GM12878 (cell line): ENCODE measurements at regions of chr5 and their contacts with region 1.

Region 1: DNA sequence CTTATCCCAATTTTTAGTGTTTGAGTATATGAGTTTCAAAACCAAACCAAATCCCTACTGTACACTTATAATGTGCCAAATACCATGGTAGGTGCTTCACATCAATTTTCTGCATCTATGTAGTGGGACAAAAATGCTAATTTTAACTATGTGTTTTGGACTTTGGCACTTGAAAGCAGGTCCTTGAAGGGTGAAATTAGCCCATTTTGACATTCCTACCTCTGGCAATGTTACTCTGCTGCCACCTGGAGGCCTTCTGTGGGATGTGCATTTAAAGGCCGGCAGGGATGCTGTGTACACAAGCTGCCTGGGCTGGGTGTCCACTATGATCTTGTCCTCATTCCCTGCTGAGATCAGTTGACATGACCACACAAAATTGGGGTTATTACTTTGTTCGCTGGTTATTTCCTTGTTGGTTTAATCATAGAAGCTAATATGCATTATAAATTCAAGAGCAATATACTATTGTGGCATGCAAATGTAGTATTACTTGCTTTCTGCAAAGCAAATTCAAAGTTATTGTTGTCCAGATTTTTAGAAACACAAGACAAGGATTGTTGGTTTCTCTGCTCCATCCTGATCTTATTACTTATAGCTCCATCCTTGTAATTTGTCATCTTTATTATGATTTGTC is 166.8 kb downstream of the ARHGEF28 start:
- DNase-seq: peak; percentile 41
- ATAC-seq: peak; percentile 79
- H3K4me3 ChIP-seq: no peak overlapping the region
- H3K27ac ChIP-seq: no peak overlapping the region
- H3K4me1 ChIP-seq: peaks cover 6% of the 10 kb centered on the region
- H3K27me3 ChIP-seq: no peaks in the 10 kb centered on the region; a peak in 1 of 4 replicates
- CTCF ChIP-seq: peak; percentile 96 to 99 (median 98); a peak in 5 of 6 replicates
- EP300 ChIP-seq: no peak
- POLR2A ChIP-seq: no peak
- RAD21 ChIP-seq: peak; percentile 99

Region 2: GRCh38 chr5:73519531-73520283 is 273.1 kb before region 1 on chr5:
- CTCF ChIA-PET with region 1: interaction called, 5 read pairs
- POLR2A ChIA-PET with region 1: no interaction called
- RAD21 ChIA-PET with region 1: interaction called, 4 read pairs
- SMC1A ChIA-PET with region 1: interaction called, 3 read pairs
- in situ Hi-C with region 1: no loop called
- intact Hi-C with region 1: loop called (anchors 2 kb)
- DNase-seq: peak; percentile 48
- ATAC-seq: peak; percentile 100
- H3K4me3 ChIP-seq: no peak overlapping the region
- H3K27ac ChIP-seq: no peak overlapping the region
- H3K4me1 ChIP-seq: no peaks in the 10 kb centered on the region
- H3K27me3 ChIP-seq: no peaks in the 10 kb centered on the region
- CTCF ChIP-seq: peak; percentile 83 to 96 (median 92)
- EP300 ChIP-seq: no peak
- POLR2A ChIP-seq: no peak
- RAD21 ChIP-seq: peak; percentile 91

Region 3: DNA sequence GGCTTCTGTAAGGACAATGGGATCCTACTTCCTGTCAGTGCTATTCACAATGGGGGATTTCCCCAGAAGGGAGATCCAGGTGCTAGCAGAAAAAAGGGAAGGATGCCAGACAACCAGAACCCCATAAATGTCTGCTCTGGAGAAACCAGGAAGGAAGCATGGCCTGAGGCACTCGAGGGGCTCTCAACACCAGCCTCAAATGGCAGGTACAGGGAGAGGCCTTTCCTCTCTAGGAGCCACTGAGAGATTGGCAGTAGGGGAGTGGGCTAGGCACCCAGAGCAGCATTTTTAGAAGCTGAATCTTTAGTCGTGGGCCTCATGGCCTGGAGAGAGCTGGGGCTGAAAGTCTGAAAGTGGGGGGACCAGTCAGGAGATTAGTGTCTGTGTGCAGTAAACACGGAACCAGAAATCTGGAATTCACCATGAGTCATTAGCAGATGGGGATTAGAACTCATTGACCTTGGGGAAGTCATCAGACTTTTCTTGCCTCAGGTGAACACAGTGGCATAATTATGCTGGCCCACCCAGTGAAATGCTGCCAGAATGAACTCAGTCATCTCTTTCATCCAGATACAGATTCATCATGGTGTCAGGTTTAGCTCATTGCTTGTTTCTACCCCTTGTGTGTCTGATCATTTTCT is 138.5 kb before region 1 on chr5:
- CTCF ChIA-PET with region 1: interaction called, 11 read pairs
- POLR2A ChIA-PET with region 1: no interaction called
- RAD21 ChIA-PET with region 1: interaction called, 3 read pairs
- SMC1A ChIA-PET with region 1: interaction called, 6 read pairs
- in situ Hi-C with region 1: no loop called
- intact Hi-C with region 1: no loop called
- DNase-seq: peak; percentile 65
- ATAC-seq: peak; percentile 88
- H3K4me3 ChIP-seq: no peak overlapping the region
- H3K27ac ChIP-seq: peak overlapping the region; percentile 59
- H3K4me1 ChIP-seq: peaks cover 23% of the 10 kb centered on the region
- H3K27me3 ChIP-seq: no peaks in the 10 kb centered on the region; a peak in 1 of 4 replicates
- CTCF ChIP-seq: no peak
- EP300 ChIP-seq: peak in 1 of 2 experiments; percentile 69; a peak in 1 of 4 replicates
- POLR2A ChIP-seq: no peak
- RAD21 ChIP-seq: no peak

Region 4: GRCh38 chr5:73693481-73694061 is 99.2 kb before region 1 on chr5:
- CTCF ChIA-PET with region 1: interaction called, 57 read pairs
- POLR2A ChIA-PET with region 1: interaction called, 3 read pairs
- RAD21 ChIA-PET with region 1: interaction called, 33 read pairs
- SMC1A ChIA-PET with region 1: interaction called, 95 read pairs
- in situ Hi-C with region 1: no loop called
- intact Hi-C with region 1: loop called (anchors 1 kb)
- DNase-seq: no peak
- ATAC-seq: peak; percentile 37
- H3K4me3 ChIP-seq: no peak overlapping the region
- H3K27ac ChIP-seq: peak overlapping the region; percentile 14; the same call in 1 of the 2 replicates
- H3K4me1 ChIP-seq: peaks cover 17% of the 10 kb centered on the region
- H3K27me3 ChIP-seq: no peaks in the 10 kb centered on the region
- CTCF ChIP-seq: peak; percentile 36 to 60 (median 38); a peak in 5 of 6 replicates
- EP300 ChIP-seq: no peak
- POLR2A ChIP-seq: no peak
- RAD21 ChIP-seq: peak; percentile 42

Region 5: GRCh38 chr5:73759771-73760170 is 33.0 kb before region 1 on chr5:
- CTCF ChIA-PET with region 1: interaction called, 17 read pairs
- POLR2A ChIA-PET with region 1: no interaction called
- RAD21 ChIA-PET with region 1: no interaction called
- SMC1A ChIA-PET with region 1: interaction called, 6 read pairs
- in situ Hi-C with region 1: no loop called
- intact Hi-C with region 1: no loop called
- DNase-seq: no peak
- ATAC-seq: peak; percentile 67
- H3K4me3 ChIP-seq: no peak overlapping the region
- H3K27ac ChIP-seq: no peak overlapping the region
- H3K4me1 ChIP-seq: no peaks in the 10 kb centered on the region
- H3K27me3 ChIP-seq: no peaks in the 10 kb centered on the region
- CTCF ChIP-seq: no peak
- EP300 ChIP-seq: no peak
- POLR2A ChIP-seq: no peak
- RAD21 ChIP-seq: no peak

Region 6: DNA sequence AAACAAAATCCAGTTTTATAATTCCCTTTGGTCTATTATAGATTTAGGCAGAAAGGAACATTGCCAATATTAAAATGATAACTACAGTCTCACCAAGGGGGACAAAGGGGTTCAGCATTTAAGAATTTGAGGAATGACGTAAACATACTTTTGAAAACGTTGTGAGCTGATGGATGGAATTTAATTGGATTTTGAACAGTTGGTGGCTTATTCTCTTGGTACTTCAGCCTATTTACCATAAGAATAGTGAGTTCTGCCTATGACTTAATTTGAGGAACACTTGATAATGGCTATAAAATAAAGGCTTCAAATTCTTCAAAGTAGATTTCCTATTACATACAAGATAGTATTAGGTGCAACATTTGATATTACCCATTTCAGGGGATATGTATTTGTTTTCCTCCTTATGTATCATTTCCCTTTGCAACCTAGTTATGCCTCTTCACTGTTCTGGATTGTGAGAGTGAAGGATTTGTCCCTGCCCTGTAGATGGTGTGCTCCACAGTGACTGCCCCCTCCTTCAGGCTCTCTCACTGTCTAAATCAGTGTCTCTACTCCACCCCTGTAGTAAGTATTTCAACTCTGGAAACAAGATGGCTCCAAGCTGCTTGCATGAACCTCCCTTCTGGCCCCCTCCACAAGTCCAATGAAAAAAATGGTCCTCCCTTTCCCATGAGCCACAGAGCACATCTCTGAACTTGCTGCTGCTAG is 58.8 kb after region 1 on chr5:
- CTCF ChIA-PET with region 1: no interaction called
- POLR2A ChIA-PET with region 1: no interaction called
- RAD21 ChIA-PET with region 1: no interaction called
- SMC1A ChIA-PET with region 1: no interaction called
- in situ Hi-C with region 1: no loop called
- intact Hi-C with region 1: no loop called
- DNase-seq: no peak
- ATAC-seq: no peak
- H3K4me3 ChIP-seq: no peak overlapping the region
- H3K27ac ChIP-seq: no peak overlapping the region
- H3K4me1 ChIP-seq: no peaks in the 10 kb centered on the region
- H3K27me3 ChIP-seq: no peaks in the 10 kb centered on the region
- CTCF ChIP-seq: no peak
- EP300 ChIP-seq: no peak
- POLR2A ChIP-seq: no peak
- RAD21 ChIP-seq: no peak

Region 7: GRCh38 chr5:74648835-74649293 is 856.1 kb after region 1 on chr5:
- CTCF ChIA-PET with region 1: interaction called, 3 read pairs
- POLR2A ChIA-PET with region 1: no interaction called
- RAD21 ChIA-PET with region 1: interaction called, 4 read pairs
- SMC1A ChIA-PET with region 1: no interaction called
- in situ Hi-C with region 1: no loop called
- intact Hi-C with region 1: loop called (anchors 5 kb)
- DNase-seq: no peak
- ATAC-seq: peak; percentile 94
- H3K4me3 ChIP-seq: no peak overlapping the region
- H3K27ac ChIP-seq: no peak overlapping the region
- H3K4me1 ChIP-seq: no peaks in the 10 kb centered on the region
- H3K27me3 ChIP-seq: no peaks in the 10 kb centered on the region; a peak in 2 of 4 replicates
- CTCF ChIP-seq: peak; percentile 60 to 73 (median 64)
- EP300 ChIP-seq: no peak
- POLR2A ChIP-seq: no peak
- RAD21 ChIP-seq: peak; percentile 95